CD8-positive, alpha-beta T cell (primary cell): ENCODE measurements at regions of chr19 and their contacts with region 1.

Region 1: DNA sequence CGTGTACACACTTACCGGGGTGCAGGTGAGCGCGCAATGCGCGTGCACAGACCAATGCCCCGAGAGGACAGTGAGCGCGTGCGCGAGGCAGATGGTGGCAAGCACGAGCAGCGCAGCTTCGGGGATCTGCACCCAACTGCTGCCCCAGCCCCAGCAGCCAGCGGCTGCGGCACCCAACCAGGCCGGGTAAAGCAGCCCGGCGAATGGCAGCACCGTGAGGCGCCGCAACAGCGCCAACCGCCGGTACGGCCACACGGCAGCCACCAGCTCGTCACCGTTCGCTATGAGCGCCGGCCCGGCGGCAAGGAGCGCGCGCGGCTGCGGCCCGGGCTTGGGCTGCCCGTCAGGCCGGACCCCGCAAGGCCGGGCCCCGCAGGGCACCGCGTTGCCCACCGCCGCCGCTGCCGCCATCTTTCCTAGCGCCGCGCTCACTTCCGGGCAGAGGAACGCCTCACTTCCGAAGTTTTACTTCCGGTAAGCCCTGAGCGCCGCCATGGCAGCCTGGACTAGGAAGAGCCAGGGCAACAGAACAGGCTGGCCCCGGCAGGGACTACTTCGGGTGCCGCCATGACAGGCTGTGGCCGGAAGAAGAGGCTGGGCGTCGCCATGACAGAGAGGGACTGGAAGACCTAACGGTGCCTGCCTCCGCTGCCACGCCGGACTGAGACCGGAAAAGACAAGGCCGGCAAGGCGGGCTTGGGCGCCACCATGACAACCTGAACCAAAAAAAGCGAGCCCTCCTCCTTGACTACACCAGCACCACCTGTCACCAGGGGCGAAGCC is at the start of gene ATP13A1:
- DNase-seq: peak; percentile 89 to 99 (median 94)
- ATAC-seq: peak; percentile 63
- H3K4me3 ChIP-seq: peak within 1 kb of the TSS; percentile 67 to 93
- H3K4me3 Mint-ChIP-seq: peak within 1 kb of the TSS; percentile 90
- H3K27ac ChIP-seq: peak within 1 kb of the TSS; percentile 88 to 97
- H3K27ac Mint-ChIP-seq: peak within 1 kb of the TSS; percentile 99
- H3K4me1 ChIP-seq: peaks cover 36% of the 10 kb centered on the region
- H3K4me1 Mint-ChIP-seq: peaks cover 43% of the 10 kb centered on the region
- H3K27me3 ChIP-seq: no peaks in the 10 kb centered on the region
- H3K27me3 Mint-ChIP-seq: no peaks in the 10 kb centered on the region
- CTCF ChIP-seq: peak; percentile 34
- total RNA-seq, gene ATP13A1: 79.4 to 87.9 TPM

Region 2: GRCh38 chr19:19354932-19355331 is 308.5 kb before region 1 on chr19:
- CTCF ChIA-PET with region 1: no interaction called
- POLR2A ChIA-PET with region 1: no interaction called
- intact Hi-C with region 1: no loop called
- DNase-seq: no peak
- ATAC-seq: no peak
- H3K4me3 ChIP-seq: no peak overlapping the region
- H3K4me3 Mint-ChIP-seq: no peak overlapping the region
- H3K27ac ChIP-seq: no peak overlapping the region
- H3K27ac Mint-ChIP-seq: no peak overlapping the region
- H3K4me1 ChIP-seq: peaks cover 6% of the 10 kb centered on the region
- H3K4me1 Mint-ChIP-seq: peaks cover 16% of the 10 kb centered on the region
- H3K27me3 ChIP-seq: no peaks in the 10 kb centered on the region
- H3K27me3 Mint-ChIP-seq: no peaks in the 10 kb centered on the region
- CTCF ChIP-seq: no peak

Region 3: DNA sequence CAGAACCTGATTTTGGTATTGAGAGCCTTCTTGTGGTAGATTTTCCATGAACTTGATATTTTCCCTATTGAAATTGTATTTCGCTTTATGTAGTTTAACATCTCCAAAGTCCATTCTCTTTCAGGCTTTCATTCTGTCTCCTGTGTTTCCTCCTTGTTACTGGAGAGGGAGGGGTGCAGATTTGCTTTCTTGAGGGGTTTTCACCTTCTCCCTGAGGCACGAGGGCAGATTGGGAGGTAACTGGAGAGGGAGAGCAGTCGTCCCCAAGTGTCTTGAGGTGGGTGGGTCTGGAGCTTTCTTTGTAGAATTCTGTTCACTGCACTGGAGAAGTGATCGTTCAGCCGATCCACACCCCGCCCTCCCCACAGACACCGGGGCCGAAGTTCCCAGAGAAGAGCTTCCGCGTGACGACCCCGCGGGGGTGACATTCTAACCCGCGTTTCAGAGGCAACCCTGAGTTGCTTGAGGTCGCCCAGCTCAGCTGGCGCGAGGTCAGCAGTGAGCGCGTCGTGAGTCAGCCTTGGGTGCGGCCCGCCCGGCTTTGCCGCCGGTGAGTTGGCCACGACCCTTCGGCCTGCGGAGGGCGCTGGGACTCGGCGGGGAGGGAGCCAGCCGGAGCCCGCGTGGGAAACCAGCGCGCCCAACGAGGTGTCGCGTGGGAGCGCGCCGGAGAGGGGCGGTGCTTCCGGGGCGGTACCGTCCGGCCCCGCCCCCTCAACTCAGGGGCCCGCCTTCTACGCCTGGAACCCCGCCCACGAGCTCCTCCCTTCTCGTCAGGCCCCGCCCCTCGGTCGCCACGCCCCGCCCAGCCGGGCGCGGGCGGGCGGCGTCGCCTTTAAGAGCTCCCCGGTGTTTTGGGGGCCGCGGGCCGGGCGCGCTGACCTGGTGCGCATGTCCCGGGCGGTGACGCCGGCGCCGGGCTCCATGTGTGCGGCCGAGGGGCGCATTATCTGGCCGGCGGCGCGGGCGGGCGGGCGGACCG is 258.3 kb before region 1 on chr19 and contains the start of gene GATAD2A:
- CTCF ChIA-PET with region 1: no interaction called
- POLR2A ChIA-PET with region 1: no interaction called
- intact Hi-C with region 1: loop called (anchors 5 to 10 kb)
- DNase-seq: peak; percentile 81 to 98 (median 92)
- ATAC-seq: peak; percentile 89
- H3K4me3 ChIP-seq: peak within 1 kb of the TSS; percentile 67 to 85
- H3K4me3 Mint-ChIP-seq: peak within 1 kb of the TSS; percentile 97
- H3K27ac ChIP-seq: peak within 1 kb of the TSS; percentile 70 to 86
- H3K27ac Mint-ChIP-seq: peak within 1 kb of the TSS; percentile 89
- H3K4me1 ChIP-seq: peaks cover 44% of the 10 kb centered on the region
- H3K4me1 Mint-ChIP-seq: peaks cover 62% of the 10 kb centered on the region
- H3K27me3 ChIP-seq: no peaks in the 10 kb centered on the region
- H3K27me3 Mint-ChIP-seq: no peaks in the 10 kb centered on the region
- CTCF ChIP-seq: no peak
- total RNA-seq, gene GATAD2A: 135 to 142 TPM

Region 4: DNA sequence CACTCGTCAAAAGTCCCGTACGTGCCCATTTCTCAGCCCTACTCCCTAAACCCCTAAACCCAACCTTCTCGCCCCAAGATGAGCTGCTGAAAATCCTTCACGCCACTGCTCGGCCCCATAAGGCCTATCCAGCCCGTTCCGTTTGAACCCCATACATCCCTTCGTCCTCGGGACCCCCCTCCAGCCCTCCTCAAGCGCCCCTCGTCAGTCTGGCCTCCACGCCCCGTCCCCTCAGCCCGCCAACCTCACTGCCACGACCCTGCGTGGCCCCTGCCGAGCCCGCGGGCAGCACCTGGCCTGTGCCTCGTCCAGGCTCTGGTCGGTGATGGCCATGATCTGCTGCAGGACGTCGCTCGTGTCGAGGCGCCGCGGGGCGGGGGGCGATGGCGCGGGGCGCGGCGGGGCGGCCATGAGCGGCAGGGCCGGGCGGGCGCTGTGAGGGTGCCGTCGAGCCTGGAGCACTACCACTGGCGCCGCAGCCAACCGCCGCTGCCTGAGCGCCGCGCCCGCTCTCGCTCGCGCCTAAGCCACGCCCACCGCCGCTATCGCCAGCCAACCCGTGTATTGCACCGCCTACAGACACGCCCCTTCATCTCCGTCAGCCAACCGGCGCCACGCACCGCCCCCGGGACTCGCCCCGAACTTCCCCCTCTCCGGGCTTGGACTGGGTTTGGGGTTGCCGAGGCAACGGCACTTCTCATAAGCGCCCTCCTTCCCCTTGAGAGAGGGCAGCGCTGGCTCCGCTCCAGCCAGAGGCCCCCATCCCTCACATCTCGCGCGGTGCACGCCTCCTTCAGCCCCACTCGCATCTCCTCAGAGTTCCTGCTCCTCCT is 45.0 kb before region 1 on chr19 and contains the start of gene PBX4:
- CTCF ChIA-PET with region 1: no interaction called
- POLR2A ChIA-PET with region 1: no interaction called
- intact Hi-C with region 1: loop called in 1 of 2 experiments (anchors 1 kb)
- DNase-seq: peak; percentile 98 to 100 (median 99)
- ATAC-seq: peak; percentile 96
- H3K4me3 ChIP-seq: peak within 1 kb of the TSS; percentile 70 to 91
- H3K4me3 Mint-ChIP-seq: peak within 1 kb of the TSS; percentile 90
- H3K27ac ChIP-seq: peak within 1 kb of the TSS; percentile 74 to 75
- H3K27ac Mint-ChIP-seq: peak within 1 kb of the TSS; percentile 92
- H3K4me1 ChIP-seq: peaks cover 28% of the 10 kb centered on the region
- H3K4me1 Mint-ChIP-seq: peaks cover 42% of the 10 kb centered on the region
- H3K27me3 ChIP-seq: no peaks in the 10 kb centered on the region
- H3K27me3 Mint-ChIP-seq: no peaks in the 10 kb centered on the region
- CTCF ChIP-seq: no peak
- total RNA-seq, gene PBX4: 44.4 to 48.8 TPM

Region 5: DNA sequence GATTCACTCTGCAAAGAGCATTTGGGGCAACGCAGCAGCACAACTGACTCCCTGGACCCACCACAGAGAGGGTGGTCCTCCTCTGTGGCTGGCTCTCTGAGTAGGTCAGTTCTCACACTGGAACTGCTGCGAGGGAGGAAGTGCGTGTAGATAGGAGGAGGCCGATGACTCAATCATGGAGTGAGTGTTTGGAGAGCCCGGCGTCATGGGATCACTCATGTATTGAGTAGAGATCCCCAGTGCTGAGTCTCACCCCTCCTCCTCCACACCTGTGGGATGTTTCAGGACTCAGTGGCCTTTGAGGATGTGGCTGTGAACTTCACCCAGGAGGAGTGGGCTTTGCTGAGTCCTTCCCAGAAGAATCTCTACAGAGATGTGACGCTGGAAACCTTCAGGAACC is 14.1 kb after region 1 on chr19:
- CTCF ChIA-PET with region 1: no interaction called
- POLR2A ChIA-PET with region 1: interaction called, 11 read pairs
- intact Hi-C with region 1: no loop called
- DNase-seq: no peak
- ATAC-seq: no peak
- H3K4me3 ChIP-seq: peak overlapping the region in 1 of 2 experiments; percentile 1
- H3K4me3 Mint-ChIP-seq: peak overlapping the region; percentile 15
- H3K27ac ChIP-seq: no peak overlapping the region
- H3K27ac Mint-ChIP-seq: peak overlapping the region; percentile 60
- H3K4me1 ChIP-seq: no peaks in the 10 kb centered on the region
- H3K4me1 Mint-ChIP-seq: peaks cover 27% of the 10 kb centered on the region
- H3K27me3 ChIP-seq: no peaks in the 10 kb centered on the region
- H3K27me3 Mint-ChIP-seq: no peaks in the 10 kb centered on the region
- CTCF ChIP-seq: no peak

Region 6: GRCh38 chr19:19776041-19777008 is 112.9 kb after region 1 on chr19:
- CTCF ChIA-PET with region 1: no interaction called
- POLR2A ChIA-PET with region 1: interaction called, 36 read pairs
- intact Hi-C with region 1: loop called (anchors 1 to 2 kb)
- DNase-seq: peak; percentile 81 to 96 (median 92)
- ATAC-seq: peak; percentile 99
- H3K4me3 ChIP-seq: peak overlapping the region; percentile 60 to 81
- H3K4me3 Mint-ChIP-seq: peak overlapping the region; percentile 97
- H3K27ac ChIP-seq: peak overlapping the region; percentile 42 to 71
- H3K27ac Mint-ChIP-seq: peak overlapping the region; percentile 98
- H3K4me1 ChIP-seq: peaks cover 17% of the 10 kb centered on the region
- H3K4me1 Mint-ChIP-seq: peaks cover 65% of the 10 kb centered on the region
- H3K27me3 ChIP-seq: no peaks in the 10 kb centered on the region
- H3K27me3 Mint-ChIP-seq: no peaks in the 10 kb centered on the region
- CTCF ChIP-seq: no peak

Region 7: DNA sequence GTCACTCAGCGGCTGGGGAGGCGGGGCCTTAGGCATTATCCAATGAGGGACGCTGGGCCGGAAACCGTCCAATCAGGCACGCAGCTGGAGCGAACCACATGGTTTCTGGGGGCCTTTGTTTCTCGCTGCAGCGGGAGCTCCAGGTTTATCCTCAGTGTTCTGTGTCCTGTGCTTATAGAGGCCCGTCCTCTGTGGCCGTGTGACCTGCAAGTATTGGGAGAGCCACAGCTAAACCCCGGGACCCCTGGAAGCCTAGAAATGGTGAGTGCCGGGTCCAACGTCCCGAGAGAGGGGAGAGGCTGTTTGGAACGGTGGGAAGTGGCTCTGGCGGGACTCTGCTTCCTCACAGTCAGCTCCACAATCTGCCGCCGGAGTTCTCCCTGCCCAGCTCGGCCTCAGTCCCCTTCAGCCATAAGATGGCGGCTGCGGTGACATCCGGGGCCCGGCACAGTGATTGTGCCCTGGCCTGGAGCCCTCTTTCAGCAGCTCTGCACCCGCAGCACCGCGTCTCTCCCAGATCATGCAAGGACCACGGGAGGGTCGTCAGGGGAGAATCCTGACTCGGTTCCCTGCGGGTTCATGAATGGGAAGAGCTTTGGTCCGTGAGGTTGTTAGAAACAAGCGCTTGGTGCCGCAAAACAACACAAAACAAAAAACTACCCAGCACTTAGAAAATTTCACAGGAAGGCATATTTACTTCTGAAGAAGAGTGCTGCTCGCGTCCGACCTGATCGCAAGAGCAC is 202.5 kb after region 1 on chr19 and contains the start of gene ZNF253:
- CTCF ChIA-PET with region 1: no interaction called
- POLR2A ChIA-PET with region 1: interaction called, 49 read pairs
- intact Hi-C with region 1: loop called (anchors 1 to 2 kb)
- DNase-seq: peak; percentile 88 to 97 (median 95)
- ATAC-seq: peak; percentile 93
- H3K4me3 ChIP-seq: peak within 1 kb of the TSS; percentile 89 to 99
- H3K4me3 Mint-ChIP-seq: peak within 1 kb of the TSS; percentile 100
- H3K27ac ChIP-seq: peak within 1 kb of the TSS; percentile 89 to 91
- H3K27ac Mint-ChIP-seq: peak within 1 kb of the TSS; percentile 98
- H3K4me1 ChIP-seq: peaks cover 22% of the 10 kb centered on the region
- H3K4me1 Mint-ChIP-seq: peaks cover 39% of the 10 kb centered on the region
- H3K27me3 ChIP-seq: no peaks in the 10 kb centered on the region
- H3K27me3 Mint-ChIP-seq: no peaks in the 10 kb centered on the region
- CTCF ChIP-seq: no peak
- total RNA-seq, gene ZNF253: 2.6 to 3.2 TPM